ENCODE measurements at regions of chr14 and their contacts with region 1.

Region 1: GRCh38 chr14:80055667-80056496 is 155.4 kb downstream of the DIO2 start:
- DNase-seq: peak; percentile 78
- ATAC-seq: peak; percentile 80
- H3K4me3 ChIP-seq: no peak overlapping the region
- H3K27ac ChIP-seq: no peak overlapping the region
- H3K4me1 ChIP-seq: no peaks in the 10 kb centered on the region; the same call in 1 of the 2 replicates
- H3K27me3 ChIP-seq: no peaks in the 10 kb centered on the region
- CTCF ChIP-seq: peak; percentile 87
- POLR2A ChIP-seq: no peak
- RAD21 ChIP-seq: peak; percentile 94

Region 2: GRCh38 chr14:78959674-78960264 is 1096.1 kb before region 1 on chr14:
- CTCF ChIA-PET with region 1: no interaction called
- POLR2A ChIA-PET with region 1: no interaction called
- dilution Hi-C with region 1: no loop called
- in situ Hi-C with region 1: no loop called
- intact Hi-C with region 1: loop called (anchors 2 kb)
- DNase-seq: peak; percentile 82
- ATAC-seq: peak; percentile 97
- H3K4me3 ChIP-seq: no peak overlapping the region
- H3K27ac ChIP-seq: no peak overlapping the region
- H3K4me1 ChIP-seq: no peaks in the 10 kb centered on the region
- H3K27me3 ChIP-seq: no peaks in the 10 kb centered on the region
- CTCF ChIP-seq: peak; percentile 87
- POLR2A ChIP-seq: no peak
- RAD21 ChIP-seq: peak; percentile 86

Region 3: GRCh38 chr14:79749065-79749464 is 306.8 kb before region 1 on chr14:
- CTCF ChIA-PET with region 1: no interaction called
- POLR2A ChIA-PET with region 1: no interaction called
- dilution Hi-C with region 1: no loop called
- in situ Hi-C with region 1: no loop called
- intact Hi-C with region 1: no loop called
- DNase-seq: no peak
- ATAC-seq: no peak
- H3K4me3 ChIP-seq: no peak overlapping the region
- H3K27ac ChIP-seq: no peak overlapping the region
- H3K4me1 ChIP-seq: no peaks in the 10 kb centered on the region
- H3K27me3 ChIP-seq: no peaks in the 10 kb centered on the region
- CTCF ChIP-seq: no peak
- POLR2A ChIP-seq: no peak
- RAD21 ChIP-seq: no peak

Region 4: DNA sequence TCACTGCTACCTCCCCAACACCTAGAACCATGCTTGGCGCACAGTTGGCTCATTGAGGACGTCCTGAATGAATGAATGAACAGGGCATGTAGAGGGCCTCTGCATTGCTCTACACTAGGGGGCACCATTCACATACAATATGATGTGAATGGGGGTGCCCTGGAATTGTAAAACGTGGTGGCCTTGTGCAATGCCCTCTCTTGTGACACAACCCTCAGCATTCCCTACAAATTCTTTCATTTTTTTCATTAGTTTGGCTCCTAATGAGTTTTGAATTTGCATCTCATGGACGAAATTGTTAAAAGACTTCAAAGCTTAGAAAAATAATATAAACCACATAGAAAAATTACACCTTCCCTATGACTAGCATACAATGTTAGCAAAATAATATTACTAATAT is 157.7 kb after region 1 on chr14:
- CTCF ChIA-PET with region 1: interaction called, 4 read pairs
- POLR2A ChIA-PET with region 1: interaction called, 8 read pairs
- dilution Hi-C with region 1: no loop called
- in situ Hi-C with region 1: no loop called
- intact Hi-C with region 1: loop called (anchors 2 kb)
- DNase-seq: peak; percentile 59
- ATAC-seq: peak; percentile 65
- H3K4me3 ChIP-seq: no peak overlapping the region
- H3K27ac ChIP-seq: no peak overlapping the region
- H3K4me1 ChIP-seq: peaks cover 4% of the 10 kb centered on the region
- H3K27me3 ChIP-seq: no peaks in the 10 kb centered on the region
- CTCF ChIP-seq: peak; percentile 68
- POLR2A ChIP-seq: no peak
- RAD21 ChIP-seq: peak; percentile 74

Region 5: GRCh38 chr14:80475074-80475473 is 419.2 kb after region 1 on chr14:
- CTCF ChIA-PET with region 1: no interaction called
- POLR2A ChIA-PET with region 1: no interaction called
- dilution Hi-C with region 1: no loop called
- in situ Hi-C with region 1: no loop called
- intact Hi-C with region 1: loop called (anchors 5 kb)
- DNase-seq: peak; percentile 82
- ATAC-seq: peak; percentile 74
- H3K4me3 ChIP-seq: no peak overlapping the region
- H3K27ac ChIP-seq: peak overlapping the region; percentile 82
- H3K4me1 ChIP-seq: peaks cover 15% of the 10 kb centered on the region
- H3K27me3 ChIP-seq: no peaks in the 10 kb centered on the region
- CTCF ChIP-seq: no peak
- POLR2A ChIP-seq: no peak
- RAD21 ChIP-seq: no peak

Region 6: DNA sequence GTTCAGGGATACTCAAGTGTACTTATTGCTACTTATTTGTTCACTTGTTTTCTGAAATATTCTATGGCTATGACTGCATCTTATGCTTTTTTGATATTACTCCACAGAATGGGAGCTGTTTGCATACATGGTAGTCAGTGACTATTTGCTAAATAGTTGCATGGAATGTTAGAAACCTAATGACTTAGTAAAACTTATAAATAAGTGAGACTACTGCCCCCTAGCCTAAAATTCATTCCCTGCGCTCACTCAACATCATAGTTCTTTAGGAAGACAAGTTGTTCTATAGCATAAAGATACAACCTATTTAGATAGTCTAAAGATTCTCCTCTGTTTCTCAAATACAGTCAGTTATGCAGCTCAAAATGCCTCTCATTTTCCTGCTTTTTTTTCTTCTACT is 580.2 kb after region 1 on chr14:
- CTCF ChIA-PET with region 1: no interaction called
- POLR2A ChIA-PET with region 1: no interaction called
- dilution Hi-C with region 1: no loop called
- in situ Hi-C with region 1: no loop called
- intact Hi-C with region 1: loop called (anchors 5 kb)
- DNase-seq: peak; percentile 17
- ATAC-seq: no peak
- H3K4me3 ChIP-seq: no peak overlapping the region
- H3K27ac ChIP-seq: no peak overlapping the region
- H3K4me1 ChIP-seq: peaks cover 7% of the 10 kb centered on the region
- H3K27me3 ChIP-seq: no peaks in the 10 kb centered on the region
- CTCF ChIP-seq: no peak
- POLR2A ChIP-seq: no peak
- RAD21 ChIP-seq: no peak

Region 7: DNA sequence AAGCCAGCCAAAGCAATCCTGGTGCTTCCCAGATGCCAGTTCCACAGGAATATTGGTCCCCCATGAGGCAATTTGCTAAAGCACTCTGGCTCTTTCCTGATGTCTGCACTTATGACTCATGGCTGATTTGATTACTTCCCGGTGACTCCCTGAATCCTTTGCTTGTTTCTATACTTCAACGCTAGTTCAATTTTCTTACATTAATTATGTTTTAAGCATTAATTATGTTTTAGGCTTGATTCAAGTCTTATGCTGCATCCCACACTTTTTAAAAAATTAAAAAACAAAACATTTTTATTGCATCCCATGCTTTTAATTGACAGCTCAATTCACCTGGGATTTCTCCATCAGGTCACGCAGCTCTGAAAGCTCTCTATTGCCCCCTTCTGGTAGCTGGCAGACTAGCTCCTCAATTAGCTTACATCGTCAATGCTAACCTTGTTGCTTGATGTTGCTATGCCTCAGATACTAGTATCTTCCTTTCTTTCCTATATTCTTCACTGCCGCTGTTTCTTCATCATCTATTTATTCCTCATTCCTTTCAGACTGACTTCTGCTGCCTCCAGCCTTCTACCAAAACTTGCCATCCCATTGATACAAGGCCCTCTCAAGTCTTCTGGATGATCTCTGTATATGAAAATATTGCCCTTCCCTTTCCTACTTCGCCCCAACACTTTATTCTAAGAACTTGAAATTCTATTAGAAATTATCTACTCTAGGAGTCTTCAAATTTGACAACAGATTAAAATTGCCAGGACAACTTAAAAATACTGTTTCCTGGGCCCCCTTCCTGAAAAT is 931.6 kb after region 1 on chr14:
- CTCF ChIA-PET with region 1: interaction called, 6 read pairs
- POLR2A ChIA-PET with region 1: no interaction called
- dilution Hi-C with region 1: no loop called
- in situ Hi-C with region 1: no loop called
- intact Hi-C with region 1: loop called (anchors 5 kb)
- DNase-seq: peak; percentile 69
- ATAC-seq: peak; percentile 89
- H3K4me3 ChIP-seq: no peak overlapping the region
- H3K27ac ChIP-seq: no peak overlapping the region
- H3K4me1 ChIP-seq: no peaks in the 10 kb centered on the region
- H3K27me3 ChIP-seq: peaks cover 4% of the 10 kb centered on the region
- CTCF ChIP-seq: peak; percentile 82
- POLR2A ChIP-seq: no peak
- RAD21 ChIP-seq: peak; percentile 76

Measured in IMR-90 (cell line).